Posterior vena cava (tissue), 2 donors: ENCODE measurements at regions of chr10 and their contacts with region 1.

Region 1: GRCh38 chr10:11913074-11913641 is 90.0 kb downstream of the PROSER2 start:
- DNase-seq: peak; percentile 57

Region 2: GRCh38 chr10:10499839-10500238 is 1413.3 kb before region 1 on chr10:
- intact Hi-C with region 1: no loop called
- DNase-seq: no peak

Region 3: GRCh38 chr10:11864727-11865126 is 48.4 kb before region 1 on chr10:
- intact Hi-C with region 1: loop called in 1 of 2 experiments (anchors 1 kb)
- DNase-seq: peak; percentile 5

Region 4: GRCh38 chr10:13276749-13277365 is 1363.7 kb after region 1 on chr10:
- intact Hi-C with region 1: loop called in 1 of 2 experiments (anchors 5 kb)
- DNase-seq: no peak